Tibial artery (tissue), 4 donors: ENCODE measurements at regions of chr3 and their contacts with region 1.

Region 1: DNA sequence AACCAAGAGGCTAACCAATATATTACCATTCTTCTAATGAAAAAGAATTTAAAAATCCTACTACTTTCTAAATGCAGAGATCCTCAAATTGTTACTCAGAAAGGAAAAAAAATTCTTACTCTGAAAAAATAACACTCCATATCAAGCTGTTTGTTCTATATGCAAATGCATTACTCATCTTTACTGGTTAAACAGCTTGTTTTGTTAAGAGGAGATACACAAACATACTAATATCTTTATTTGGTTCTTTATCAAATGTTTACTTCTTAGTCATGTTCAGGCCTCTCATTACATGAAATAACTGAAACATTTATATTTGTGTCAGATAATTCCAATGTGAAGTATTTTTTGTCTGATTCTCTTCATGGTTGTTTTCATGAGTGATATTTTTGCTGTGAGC is 146.8 kb downstream of the PCCB start:
- DNase-seq: no peak
- H3K4me3 ChIP-seq: no peak overlapping the region
- H3K27ac ChIP-seq: no peak overlapping the region
- H3K4me1 ChIP-seq: peaks cover 0 to 13% (median 1%) of the 10 kb centered on the region in 4 donors
- H3K27me3 ChIP-seq: no peaks in the 10 kb centered on the region
- CTCF ChIP-seq: no peak

Region 2: DNA sequence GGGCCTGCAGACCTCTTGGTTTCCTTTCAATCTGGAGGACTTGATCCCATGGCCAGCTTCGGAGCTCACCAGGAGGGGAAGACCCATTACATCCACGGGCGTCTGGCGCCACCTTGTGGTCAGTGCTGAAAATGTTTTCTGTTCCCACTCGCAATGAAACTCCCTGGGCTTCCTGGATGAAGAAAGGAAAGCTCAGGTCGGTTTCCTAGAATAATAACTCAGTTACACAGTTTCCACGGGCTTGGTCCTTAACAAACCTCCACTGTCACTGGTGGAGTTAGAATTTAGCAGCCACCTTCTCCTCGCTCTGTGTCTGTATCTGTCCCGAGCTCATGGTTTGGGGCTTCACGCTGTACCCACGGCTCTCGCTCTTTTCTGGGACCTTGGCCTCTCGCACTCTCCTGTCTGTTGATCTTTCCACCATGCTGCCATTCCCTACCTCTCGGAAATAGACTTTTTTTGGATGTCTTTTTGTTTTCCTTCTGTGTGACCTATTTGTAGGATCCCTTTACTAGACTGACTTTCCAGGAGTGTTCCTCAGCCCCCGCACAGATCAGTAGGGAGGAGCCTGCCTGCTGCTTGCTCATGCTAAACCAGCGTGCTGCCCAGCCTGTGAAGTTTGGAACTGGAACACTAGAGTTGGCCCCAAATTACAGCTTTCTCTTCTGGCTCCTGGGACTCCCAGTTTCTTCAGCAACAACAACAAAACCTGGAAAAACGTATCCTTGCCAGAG is 617.2 kb after region 1 on chr3:
- intact Hi-C with region 1: loop called (anchors 10 kb)
- DNase-seq: peak; percentile 93 to 94
- H3K4me3 ChIP-seq: peak overlapping the region; percentile 47 to 60
- H3K27ac ChIP-seq: peak overlapping the region; percentile 80 to 81
- H3K4me1 ChIP-seq: peaks cover 0 to 8% (median 4%) of the 10 kb centered on the region in 4 donors
- H3K27me3 ChIP-seq: no peaks in the 10 kb centered on the region
- CTCF ChIP-seq: peak; percentile 85 to 96